Calu3 (cell line): ENCODE measurements at regions of chrX and their contacts with region 1.

Region 1: DNA sequence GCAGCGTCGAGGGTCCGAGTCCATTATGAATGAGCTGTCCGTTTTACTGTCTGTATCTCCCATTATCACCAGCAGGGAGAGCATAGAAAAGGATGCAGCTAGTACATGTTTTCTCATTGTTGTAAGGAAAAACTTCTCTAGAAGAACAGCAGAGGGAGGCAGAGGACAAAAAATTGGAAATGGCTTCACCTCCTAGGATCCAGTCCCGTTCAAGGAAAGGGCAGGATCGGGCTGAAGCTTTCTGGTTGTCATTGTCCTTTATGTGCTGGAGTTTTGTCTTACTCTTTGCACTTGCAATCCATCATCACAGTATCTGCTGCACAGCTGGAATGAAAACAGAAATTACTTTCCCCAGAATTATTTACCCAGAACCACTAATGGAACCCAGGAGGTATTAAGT is 14.7 kb downstream of the NDP start:
- DNase-seq: peak; percentile 52
- H3K4me3 Mint-ChIP-seq: no peak overlapping the region
- H3K27ac Mint-ChIP-seq: no peak overlapping the region
- H3K4me1 Mint-ChIP-seq: no peaks in the 10 kb centered on the region
- H3K27me3 Mint-ChIP-seq: no peaks in the 10 kb centered on the region
- CTCF ChIP-seq: peak; percentile 72

Region 2: GRCh38 chrX:43836435-43837184 is 121.9 kb before region 1 on chrX:
- CTCF ChIA-PET with region 1: no interaction called
- intact Hi-C with region 1: loop called (anchors 5 kb)
- DNase-seq: no peak
- H3K4me3 Mint-ChIP-seq: no peak overlapping the region
- H3K27ac Mint-ChIP-seq: no peak overlapping the region
- H3K4me1 Mint-ChIP-seq: no peaks in the 10 kb centered on the region
- H3K27me3 Mint-ChIP-seq: no peaks in the 10 kb centered on the region
- CTCF ChIP-seq: peak; percentile 30

Region 3: DNA sequence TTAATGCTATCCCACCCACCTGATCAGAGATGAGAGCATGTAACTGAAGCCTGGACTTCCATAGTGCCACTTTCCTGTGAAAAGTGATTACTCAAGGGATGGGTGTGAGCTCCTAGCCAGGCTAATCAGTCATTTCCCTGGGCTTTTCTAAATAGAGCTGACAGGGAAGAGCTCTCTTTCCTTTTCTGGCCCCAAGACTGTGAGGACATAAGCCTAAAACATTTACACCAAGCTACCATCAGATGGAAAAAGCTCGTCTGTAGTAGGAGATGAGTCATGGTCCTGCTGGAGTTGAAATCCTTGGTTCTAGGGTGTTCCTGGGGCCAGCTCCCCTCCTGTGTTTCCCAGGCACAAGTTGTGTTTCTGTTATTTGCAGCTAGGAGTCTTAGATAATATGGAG is 67.0 kb after region 1 on chrX:
- CTCF ChIA-PET with region 1: interaction called, 9 read pairs
- intact Hi-C with region 1: loop called (anchors 1 kb)
- DNase-seq: no peak
- H3K4me3 Mint-ChIP-seq: no peak overlapping the region
- H3K27ac Mint-ChIP-seq: no peak overlapping the region
- H3K4me1 Mint-ChIP-seq: peaks cover 17% of the 10 kb centered on the region
- H3K27me3 Mint-ChIP-seq: no peaks in the 10 kb centered on the region
- CTCF ChIP-seq: no peak

Region 4: GRCh38 chrX:44203791-44204190 is 245.3 kb after region 1 on chrX:
- CTCF ChIA-PET with region 1: interaction called, 6 read pairs
- intact Hi-C with region 1: loop called (anchors 5 kb)
- DNase-seq: peak; percentile 24
- H3K4me3 Mint-ChIP-seq: no peak overlapping the region
- H3K27ac Mint-ChIP-seq: no peak overlapping the region
- H3K4me1 Mint-ChIP-seq: no peaks in the 10 kb centered on the region
- H3K27me3 Mint-ChIP-seq: no peaks in the 10 kb centered on the region
- CTCF ChIP-seq: no peak

Region 5: DNA sequence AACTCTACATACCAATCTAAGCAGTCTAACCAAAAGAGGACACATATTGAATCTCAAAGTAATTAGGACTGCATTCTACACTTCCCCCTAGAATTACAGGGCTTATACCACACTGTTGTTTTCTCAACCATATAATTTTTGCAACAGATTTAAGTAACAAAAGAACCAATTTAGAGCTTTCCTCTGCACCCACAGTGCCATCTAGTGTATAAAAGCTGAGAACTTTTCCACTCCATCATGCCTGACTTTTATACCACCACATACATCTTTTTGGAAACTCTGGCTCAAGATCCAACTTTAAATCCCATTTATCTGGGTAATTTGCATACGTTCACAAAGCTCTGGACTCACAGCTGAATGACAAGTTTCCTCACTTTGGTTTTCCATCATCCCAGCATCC is 285.5 kb after region 1 on chrX:
- CTCF ChIA-PET with region 1: interaction called, 26 read pairs
- intact Hi-C with region 1: loop called (anchors 1 kb)
- DNase-seq: peak; percentile 10
- H3K4me3 Mint-ChIP-seq: no peak overlapping the region
- H3K27ac Mint-ChIP-seq: no peak overlapping the region
- H3K4me1 Mint-ChIP-seq: peaks cover 26% of the 10 kb centered on the region
- H3K27me3 Mint-ChIP-seq: no peaks in the 10 kb centered on the region
- CTCF ChIP-seq: peak; percentile 33